ENCODE measurements at regions of chr4 and their contacts with region 1.

Region 1: GRCh38 chr4:110510955-110511544 is 35.1 kb downstream of the ENPEP start:
- DNase-seq: no peak
- H3K4me3 ChIP-seq: no peak overlapping the region
- H3K27ac ChIP-seq: no peak overlapping the region
- H3K4me1 ChIP-seq: peaks cover 0 to 14% (median 10%) of the 10 kb centered on the region in 6 donors
- H3K27me3 ChIP-seq: no peaks in the 10 kb centered on the region
- CTCF ChIP-seq: peak in 9 of 11 experiments; percentile 39 to 74 (median 56)
- POLR2A ChIP-seq: no peak

Region 2: GRCh38 chr4:110005461-110006056 is 505.5 kb before region 1 on chr4:
- intact Hi-C with region 1: loop called (anchors 5 kb)
- DNase-seq: no peak
- H3K4me3 ChIP-seq: no peak overlapping the region
- H3K27ac ChIP-seq: no peak overlapping the region
- H3K4me1 ChIP-seq: no peaks in the 10 kb centered on the region
- H3K27me3 ChIP-seq: peaks cover 0 to 10% (median 0%) of the 10 kb centered on the region in 7 donors
- CTCF ChIP-seq: peak in 10 of 11 experiments; percentile 10 to 67 (median 55)
- POLR2A ChIP-seq: no peak

Region 3: GRCh38 chr4:110610940-110611831 is 100.1 kb after region 1 on chr4:
- intact Hi-C with region 1: no loop called
- DNase-seq: no peak
- H3K4me3 ChIP-seq: peak overlapping the region in 1 of 8 donors; percentile 22
- H3K27ac ChIP-seq: no peak overlapping the region
- H3K4me1 ChIP-seq: peaks cover 0 to 18% (median 3%) of the 10 kb centered on the region in 6 donors
- H3K27me3 ChIP-seq: peaks cover 0 to 92% (median 77%) of the 10 kb centered on the region in 7 donors
- CTCF ChIP-seq: no peak
- POLR2A ChIP-seq: no peak

Measured in spleen (tissue), 13 donors.